ENCODE measurements at regions of chr3 and their contacts with region 1.

Region 1: GRCh38 chr3:177359593-177360357 is 162.5 kb upstream of the TBL1XR1 start:
- DNase-seq: peak; percentile 99
- ATAC-seq: peak; percentile 90
- H3K4me3 ChIP-seq: peak overlapping the region; percentile 5; the same call in 1 of the 2 replicates
- H3K27ac ChIP-seq: peak overlapping the region; percentile 59
- H3K4me1 ChIP-seq: peaks cover 27% of the 10 kb centered on the region
- H3K27me3 ChIP-seq: no peaks in the 10 kb centered on the region
- CTCF ChIP-seq: no peak
- POLR2A ChIP-seq: 0 out of 2 replicates have a peak, but pooled peaks have one; percentile 28
- RAD21 ChIP-seq: peak; percentile 71

Region 2: DNA sequence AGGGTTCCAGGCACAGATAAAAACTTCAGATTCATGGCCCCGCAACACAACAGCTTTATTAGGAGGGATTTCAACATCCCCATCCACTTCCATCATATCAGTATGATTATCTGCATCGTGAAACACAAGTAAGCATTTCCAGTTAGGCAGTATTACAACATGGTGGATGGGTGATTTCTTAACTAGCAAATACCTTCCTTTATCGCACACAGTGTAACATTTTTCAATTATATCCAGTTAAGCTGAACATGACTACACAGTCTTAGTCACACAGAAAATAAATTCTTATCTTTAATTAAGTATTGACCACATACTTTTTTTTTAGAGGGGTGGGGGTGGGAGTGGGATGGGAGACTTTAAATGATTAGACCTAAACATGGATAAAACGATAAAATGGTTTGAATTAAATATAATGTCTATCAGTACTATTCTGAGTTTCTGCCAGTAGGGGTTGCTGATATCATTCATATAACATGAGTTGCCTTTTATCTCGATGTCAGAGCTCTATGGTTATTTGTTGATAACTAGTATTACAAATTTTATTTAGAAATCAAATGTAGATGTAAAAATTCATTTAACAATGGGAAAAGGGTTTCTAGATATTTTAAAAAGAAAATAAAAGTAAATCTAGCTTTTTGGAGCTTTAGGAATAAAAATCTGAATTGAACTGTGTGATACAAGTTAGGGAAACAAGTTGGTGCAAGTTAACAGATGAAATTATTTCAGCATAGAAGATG is 309.1 kb before region 1 on chr3:
- CTCF ChIA-PET with region 1: no interaction called
- POLR2A ChIA-PET with region 1: no interaction called
- dilution Hi-C with region 1: no loop called
- in situ Hi-C with region 1: loop called (anchors 10 kb)
- intact Hi-C with region 1: loop called (anchors 1 kb)
- DNase-seq: peak; percentile 64
- ATAC-seq: peak; percentile 83
- H3K4me3 ChIP-seq: no peak overlapping the region
- H3K27ac ChIP-seq: no peak overlapping the region; the same call in 1 of the 2 replicates
- H3K4me1 ChIP-seq: no peaks in the 10 kb centered on the region
- H3K27me3 ChIP-seq: no peaks in the 10 kb centered on the region
- CTCF ChIP-seq: peak; percentile 64
- POLR2A ChIP-seq: 0 out of 2 replicates have a peak, but pooled peaks have one; percentile 35
- RAD21 ChIP-seq: peak; percentile 78

Region 3: DNA sequence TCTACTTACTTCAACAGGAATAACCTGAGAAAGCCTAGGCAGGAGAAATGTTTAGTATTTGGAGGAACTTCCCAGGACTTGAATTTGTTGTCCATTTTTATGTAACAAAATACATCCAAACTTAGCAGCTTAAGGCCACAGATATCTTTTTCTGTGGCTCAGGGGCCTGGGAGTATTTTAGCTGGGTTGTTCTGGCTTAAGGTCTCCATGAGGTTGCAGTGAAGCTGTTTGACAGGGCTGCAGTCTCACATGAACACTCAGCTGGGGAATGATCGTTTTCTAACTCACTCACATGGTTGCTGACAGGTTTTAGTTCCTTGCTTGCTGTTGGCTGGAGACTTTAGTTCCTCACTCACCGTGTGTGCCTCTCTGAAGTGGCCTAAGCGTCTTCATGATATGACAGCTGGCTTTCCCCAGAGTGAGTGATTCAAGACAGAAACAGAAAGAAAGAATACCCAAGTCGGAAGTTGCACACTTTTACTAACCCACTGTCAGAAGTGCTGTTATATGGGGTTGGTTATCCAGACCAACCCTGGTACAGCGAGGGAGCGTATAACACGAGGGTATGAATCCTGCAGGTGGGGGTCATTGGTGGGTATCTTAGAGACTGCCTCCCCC is 67.2 kb after region 1 on chr3:
- CTCF ChIA-PET with region 1: no interaction called
- POLR2A ChIA-PET with region 1: no interaction called
- dilution Hi-C with region 1: no loop called
- in situ Hi-C with region 1: no loop called
- intact Hi-C with region 1: no loop called
- DNase-seq: no peak
- ATAC-seq: no peak
- H3K4me3 ChIP-seq: no peak overlapping the region
- H3K27ac ChIP-seq: no peak overlapping the region
- H3K4me1 ChIP-seq: no peaks in the 10 kb centered on the region
- H3K27me3 ChIP-seq: no peaks in the 10 kb centered on the region; the same call in 1 of the 2 replicates
- CTCF ChIP-seq: no peak
- POLR2A ChIP-seq: no peak
- RAD21 ChIP-seq: no peak

Region 4: GRCh38 chr3:177478170-177478860 is 118.5 kb after region 1 on chr3:
- CTCF ChIA-PET with region 1: no interaction called
- POLR2A ChIA-PET with region 1: no interaction called
- dilution Hi-C with region 1: no loop called
- in situ Hi-C with region 1: no loop called
- intact Hi-C with region 1: loop called (anchors 1 kb)
- DNase-seq: peak; percentile 100
- ATAC-seq: peak; percentile 91
- H3K4me3 ChIP-seq: no peak overlapping the region
- H3K27ac ChIP-seq: peak overlapping the region; percentile 79; the same call in 1 of the 2 replicates
- H3K4me1 ChIP-seq: peaks cover 8% of the 10 kb centered on the region
- H3K27me3 ChIP-seq: no peaks in the 10 kb centered on the region
- CTCF ChIP-seq: no peak
- POLR2A ChIP-seq: no peak
- RAD21 ChIP-seq: peak; percentile 41

Region 5: DNA sequence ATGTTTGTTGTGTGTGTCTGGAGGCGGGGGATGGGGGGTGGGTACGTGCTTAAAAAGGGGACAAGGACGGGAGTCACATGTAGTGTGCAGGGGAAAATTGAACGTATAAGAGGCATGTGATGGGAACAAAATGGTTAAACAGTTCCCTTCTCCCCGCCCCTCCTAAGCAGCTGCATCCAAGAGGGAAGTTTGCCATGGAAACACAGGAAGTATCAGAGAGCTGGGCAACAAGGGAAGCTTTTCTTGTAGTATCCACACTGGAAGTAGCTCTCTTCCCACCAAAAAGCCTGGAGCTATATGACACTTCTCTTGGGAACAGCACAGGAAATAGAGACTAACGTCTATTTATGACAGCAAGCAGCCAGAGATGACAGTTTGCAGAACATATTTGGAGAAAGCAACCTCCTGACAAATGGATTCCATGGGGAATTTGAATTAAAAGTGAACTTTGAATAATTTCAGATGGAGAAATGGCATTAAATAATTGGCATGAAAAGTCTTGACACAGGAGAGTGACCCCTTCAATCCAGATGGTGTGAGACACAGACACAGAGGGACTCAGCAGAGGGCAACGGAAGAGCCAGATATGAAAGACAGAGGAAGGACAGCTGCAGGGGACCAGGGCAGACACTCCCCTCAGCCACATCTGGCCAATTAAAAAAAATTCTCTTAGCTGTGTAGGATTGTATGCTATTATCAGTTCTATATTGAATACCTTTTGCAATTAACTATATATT is 131.7 kb after region 1 on chr3:
- CTCF ChIA-PET with region 1: no interaction called
- POLR2A ChIA-PET with region 1: no interaction called
- dilution Hi-C with region 1: no loop called
- in situ Hi-C with region 1: no loop called
- intact Hi-C with region 1: no loop called
- DNase-seq: peak; percentile 41
- ATAC-seq: peak; percentile 37
- H3K4me3 ChIP-seq: no peak overlapping the region
- H3K27ac ChIP-seq: no peak overlapping the region
- H3K4me1 ChIP-seq: no peaks in the 10 kb centered on the region; the same call in 1 of the 2 replicates
- H3K27me3 ChIP-seq: no peaks in the 10 kb centered on the region; the same call in 1 of the 2 replicates
- CTCF ChIP-seq: no peak
- POLR2A ChIP-seq: no peak
- RAD21 ChIP-seq: no peak

Region 6: DNA sequence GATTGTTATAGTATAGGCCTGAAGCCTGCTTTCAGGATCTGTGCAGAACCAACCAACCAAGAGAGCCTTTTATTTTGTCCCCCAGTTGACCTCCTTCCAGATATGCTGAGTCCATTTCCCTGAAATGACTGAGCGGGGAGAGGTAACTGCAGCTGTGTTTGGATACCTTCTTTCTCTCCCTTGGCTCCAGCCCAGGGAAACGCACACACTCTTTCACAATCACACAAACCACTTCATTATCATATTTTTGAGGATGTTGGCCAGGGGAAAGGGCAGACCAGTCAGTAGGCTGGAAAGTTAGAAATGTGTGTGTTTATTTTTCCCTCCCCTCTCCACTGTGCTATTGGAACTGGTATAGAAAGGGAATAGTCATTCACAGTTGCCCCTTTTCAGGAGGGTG is 255.2 kb after region 1 on chr3:
- CTCF ChIA-PET with region 1: no interaction called
- POLR2A ChIA-PET with region 1: no interaction called
- dilution Hi-C with region 1: no loop called
- in situ Hi-C with region 1: no loop called
- intact Hi-C with region 1: loop called (anchors 5 kb)
- DNase-seq: peak; percentile 97
- ATAC-seq: peak; percentile 88
- H3K4me3 ChIP-seq: no peak overlapping the region
- H3K27ac ChIP-seq: no peak overlapping the region; the same call in 1 of the 2 replicates
- H3K4me1 ChIP-seq: peaks cover 20% of the 10 kb centered on the region
- H3K27me3 ChIP-seq: no peaks in the 10 kb centered on the region
- CTCF ChIP-seq: no peak
- POLR2A ChIP-seq: no peak
- RAD21 ChIP-seq: 0 out of 2 replicates have a peak, but pooled peaks have one; percentile 4

Region 7: GRCh38 chr3:177802151-177802900 is 442.6 kb after region 1 on chr3:
- CTCF ChIA-PET with region 1: no interaction called
- POLR2A ChIA-PET with region 1: no interaction called
- dilution Hi-C with region 1: no loop called
- in situ Hi-C with region 1: no loop called
- intact Hi-C with region 1: loop called (anchors 10 kb)
- DNase-seq: peak; percentile 61
- ATAC-seq: peak; percentile 58
- H3K4me3 ChIP-seq: no peak overlapping the region
- H3K27ac ChIP-seq: peak overlapping the region; percentile 48; the same call in 1 of the 2 replicates
- H3K4me1 ChIP-seq: peaks cover 9% of the 10 kb centered on the region
- H3K27me3 ChIP-seq: no peaks in the 10 kb centered on the region
- CTCF ChIP-seq: no peak
- POLR2A ChIP-seq: no peak
- RAD21 ChIP-seq: no peak